Uterus (tissue), 4 donors: ENCODE measurements at regions of chrX and their contacts with region 1.

Region 1: DNA sequence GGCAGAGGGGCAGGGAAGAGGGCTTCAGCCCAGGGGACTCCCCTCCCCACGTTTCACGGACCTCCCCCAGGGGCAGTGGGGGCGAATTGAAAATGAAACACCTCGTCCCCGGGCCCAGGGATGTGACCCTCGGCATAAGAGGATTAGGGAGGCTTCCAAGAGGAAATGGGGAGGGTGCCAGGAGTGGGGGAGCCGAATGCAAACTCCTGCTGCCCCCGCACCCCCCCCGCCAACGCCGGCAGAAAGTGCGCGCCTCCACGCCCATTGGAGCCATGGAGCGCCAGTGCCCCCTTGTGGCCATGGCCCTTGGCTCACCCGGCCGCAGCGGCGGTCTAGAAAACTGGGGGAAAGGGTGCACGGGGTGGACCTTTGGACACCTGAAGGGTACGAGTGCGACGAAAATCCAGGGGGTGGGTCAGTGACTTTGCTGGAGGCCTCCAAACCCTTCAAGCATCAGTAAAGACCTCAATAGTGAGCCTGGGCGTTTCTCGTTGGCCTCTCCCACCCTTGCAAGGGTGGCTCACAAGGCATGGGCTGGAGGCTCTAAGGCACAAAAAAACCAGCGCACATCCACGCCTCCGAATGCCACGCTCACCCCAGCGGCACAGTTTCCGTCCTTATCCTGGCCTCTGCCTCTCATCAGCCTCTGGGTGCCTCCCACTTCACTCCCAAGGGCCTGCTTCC is 120.8 kb upstream of the PJA1 start:
- DNase-seq: peak; percentile 80 to 86
- H3K4me3 ChIP-seq: peak overlapping the region; percentile 23 to 33
- H3K27ac ChIP-seq: peak overlapping the region; percentile 70 to 87
- H3K4me1 ChIP-seq: peaks cover 0 to 4% of the 10 kb centered on the region in 2 donors
- H3K27me3 ChIP-seq: no peaks in the 10 kb centered on the region
- CTCF ChIP-seq: peak; percentile 76 to 90 (median 88)
- POLR2A ChIP-seq: no peak

Region 2: DNA sequence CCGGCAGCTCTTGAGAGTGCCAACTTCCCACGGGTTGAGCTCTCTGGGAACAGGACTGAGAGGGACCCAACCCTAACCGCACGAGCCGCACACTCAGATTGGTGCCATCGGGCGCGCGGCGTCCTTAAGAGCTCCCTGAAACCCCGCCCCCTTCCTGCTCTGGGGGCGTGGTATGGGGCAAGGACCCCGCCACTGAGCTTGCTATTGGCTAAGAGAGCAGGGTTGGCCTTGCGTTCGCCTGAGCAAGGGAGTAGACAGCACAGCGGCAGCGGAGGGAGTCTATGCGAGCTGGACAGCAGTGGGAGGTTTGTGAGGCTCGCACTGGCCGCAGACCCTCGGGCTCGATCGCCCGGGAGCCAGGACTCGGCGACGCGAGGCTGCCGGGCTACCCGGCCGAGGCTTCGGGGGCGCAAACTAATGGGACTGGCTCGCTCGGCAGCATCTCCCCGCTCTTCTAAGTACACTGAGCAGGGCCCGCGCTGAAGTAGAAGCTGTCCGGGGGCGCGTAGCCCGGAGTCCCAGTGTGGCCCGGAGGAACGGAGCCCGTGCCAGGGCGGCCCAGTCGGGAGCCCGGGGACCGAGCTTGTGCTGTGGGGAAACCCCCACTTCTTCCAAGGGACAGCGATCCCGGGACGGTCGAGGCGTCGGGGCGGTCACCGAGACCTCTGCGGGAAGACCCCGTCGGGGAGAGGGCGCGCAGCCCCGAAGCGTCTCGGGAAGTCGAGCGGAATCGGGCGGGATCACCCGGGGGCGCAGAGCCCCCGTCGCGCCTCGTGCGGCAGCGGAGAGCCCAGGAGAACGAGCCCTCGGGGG is 457.1 kb before region 1 on chrX and contains the start of gene EFNB1:
- intact Hi-C with region 1: loop called (anchors 5 kb)
- DNase-seq: peak; percentile 92 to 94
- H3K4me3 ChIP-seq: peak within 1 kb of the TSS; percentile 59 to 62
- H3K27ac ChIP-seq: peak within 1 kb of the TSS; percentile 74 to 82
- H3K4me1 ChIP-seq: no peaks in the 10 kb centered on the region
- H3K27me3 ChIP-seq: peaks cover 0 to 4% of the 10 kb centered on the region in 2 donors
- CTCF ChIP-seq: peak in 1 of 4 experiments; percentile 17
- POLR2A ChIP-seq: peak; percentile 95 to 98
- total RNA-seq, gene EFNB1: 8.8 to 59.1 (median 28.7) TPM

Region 3: DNA sequence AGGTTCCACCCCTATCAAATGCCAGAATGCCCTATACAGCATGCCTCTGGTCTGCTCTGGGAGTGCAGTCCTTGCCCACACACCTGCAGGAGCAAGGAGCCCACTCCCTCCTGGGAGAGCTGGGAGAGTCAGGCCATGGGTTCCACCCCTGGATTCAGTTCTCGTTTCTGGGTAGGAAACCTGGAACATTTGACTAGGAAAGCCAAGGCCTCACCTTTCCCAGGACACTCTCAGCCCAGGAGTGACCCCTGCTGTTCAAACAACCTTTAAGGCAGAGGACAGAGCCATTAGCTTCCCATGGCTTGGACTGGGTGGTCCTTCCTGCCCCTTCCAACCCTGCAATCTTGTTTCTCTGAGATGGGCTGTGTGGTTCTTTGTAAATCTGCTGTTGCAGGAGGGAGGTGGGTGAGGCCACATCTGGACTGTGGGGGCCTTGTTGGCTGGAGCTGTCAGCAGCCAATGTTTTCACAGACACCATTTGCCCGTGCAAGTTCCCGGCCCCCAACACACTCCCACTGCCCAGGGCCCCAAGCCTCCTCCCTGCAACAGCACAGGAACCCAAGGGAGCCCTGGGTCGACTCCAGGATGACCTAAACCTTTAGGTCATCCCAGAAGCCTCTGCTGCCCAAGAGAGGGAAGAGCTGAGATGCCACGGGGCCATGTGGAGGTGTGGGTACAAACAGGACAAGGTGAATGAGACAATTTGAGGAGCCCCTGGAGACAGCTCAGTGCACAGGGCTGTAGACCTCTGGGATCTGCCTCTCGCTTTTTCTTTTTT is 225.2 kb before region 1 on chrX:
- intact Hi-C with region 1: loop called (anchors 10 kb)
- DNase-seq: peak; percentile 41 to 63
- H3K4me3 ChIP-seq: no peak overlapping the region
- H3K27ac ChIP-seq: no peak overlapping the region
- H3K4me1 ChIP-seq: no peaks in the 10 kb centered on the region
- H3K27me3 ChIP-seq: no peaks in the 10 kb centered on the region
- CTCF ChIP-seq: peak; percentile 27 to 67 (median 54)
- POLR2A ChIP-seq: no peak

Region 4: GRCh38 chrX:69556060-69557011 is 270.3 kb after region 1 on chrX:
- intact Hi-C with region 1: no loop called
- DNase-seq: peak; percentile 43 to 44
- H3K4me3 ChIP-seq: no peak overlapping the region
- H3K27ac ChIP-seq: peak overlapping the region; percentile 41 to 44
- H3K4me1 ChIP-seq: no peaks in the 10 kb centered on the region
- H3K27me3 ChIP-seq: no peaks in the 10 kb centered on the region
- CTCF ChIP-seq: no peak
- POLR2A ChIP-seq: no peak